CD8-positive, alpha-beta T cell (primary cell): ENCODE measurements at regions of chr3 and their contacts with region 1.

Region 1: GRCh38 chr3:178875836-178876235 is 195.8 kb downstream of the ZMAT3 start:
- DNase-seq: no peak
- ATAC-seq: no peak
- H3K4me3 ChIP-seq: no peak overlapping the region
- H3K4me3 Mint-ChIP-seq: no peak overlapping the region
- H3K27ac ChIP-seq: no peak overlapping the region
- H3K27ac Mint-ChIP-seq: no peak overlapping the region
- H3K4me1 ChIP-seq: no peaks in the 10 kb centered on the region
- H3K4me1 Mint-ChIP-seq: no peaks in the 10 kb centered on the region
- H3K27me3 ChIP-seq: no peaks in the 10 kb centered on the region
- H3K27me3 Mint-ChIP-seq: no peaks in the 10 kb centered on the region
- CTCF ChIP-seq: no peak

Region 2: DNA sequence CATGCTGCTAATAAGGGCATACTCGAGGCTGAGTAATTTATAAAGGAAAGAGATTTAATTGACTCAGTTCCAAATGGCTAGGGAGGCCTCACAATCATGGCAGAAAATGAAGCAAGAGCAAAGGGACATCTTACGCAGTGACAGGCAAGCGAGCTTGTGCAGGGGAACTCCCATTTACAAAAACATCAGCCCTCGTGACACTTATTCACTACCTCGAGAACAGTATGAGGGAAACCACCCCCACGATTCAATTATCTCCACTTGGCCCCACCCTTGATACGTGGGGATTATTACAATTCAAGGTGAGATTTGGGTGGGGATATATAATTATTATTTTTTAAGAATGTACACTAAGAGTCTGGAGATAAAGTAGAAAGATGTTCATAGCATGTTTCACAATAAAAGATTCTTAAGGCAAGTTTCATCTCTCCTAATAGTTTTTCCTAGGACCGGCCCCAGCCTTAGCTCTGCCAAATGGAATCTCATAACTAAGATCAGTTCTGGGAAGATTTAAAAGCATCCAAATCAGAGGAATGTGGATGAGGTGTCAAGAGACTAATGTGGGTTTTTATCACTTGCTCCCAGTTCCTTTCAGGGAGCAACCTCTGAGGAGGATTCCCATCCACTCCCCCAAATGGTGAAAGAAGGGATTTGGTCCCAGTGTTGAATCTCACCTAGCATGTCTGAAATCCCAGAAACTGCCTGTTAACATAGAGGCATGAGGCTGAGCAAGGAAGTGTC is 25.2 kb before region 1 on chr3:
- CTCF ChIA-PET with region 1: no interaction called
- POLR2A ChIA-PET with region 1: no interaction called
- intact Hi-C with region 1: loop called in 1 of 2 experiments (anchors 1 kb)
- DNase-seq: no peak
- ATAC-seq: no peak
- H3K4me3 ChIP-seq: no peak overlapping the region
- H3K4me3 Mint-ChIP-seq: no peak overlapping the region
- H3K27ac ChIP-seq: no peak overlapping the region
- H3K27ac Mint-ChIP-seq: no peak overlapping the region
- H3K4me1 ChIP-seq: no peaks in the 10 kb centered on the region
- H3K4me1 Mint-ChIP-seq: no peaks in the 10 kb centered on the region
- H3K27me3 ChIP-seq: no peaks in the 10 kb centered on the region
- H3K27me3 Mint-ChIP-seq: no peaks in the 10 kb centered on the region
- CTCF ChIP-seq: no peak